Mucosa of descending colon (tissue), 3 donors: ENCODE measurements at regions of chr6 and their contacts with region 1.

Region 1: DNA sequence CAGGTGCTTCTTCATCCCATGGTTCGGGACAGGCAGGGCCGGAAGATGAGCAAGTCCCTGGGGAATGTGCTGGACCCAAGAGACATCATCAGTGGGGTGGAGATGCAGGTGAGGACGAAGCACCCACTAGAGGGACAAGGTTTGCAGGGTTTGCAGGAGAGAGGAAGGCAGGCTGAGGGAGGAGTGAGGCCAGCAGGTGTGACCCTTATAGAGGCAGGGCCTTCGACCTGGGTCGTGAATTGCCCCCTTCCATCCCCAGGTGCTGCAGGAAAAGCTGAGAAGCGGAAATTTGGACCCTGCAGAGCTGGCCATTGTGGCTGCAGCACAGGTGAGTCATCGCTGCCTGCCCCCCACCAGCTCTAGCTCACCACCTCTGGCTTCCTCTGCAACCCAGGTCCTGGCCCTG is 8.4 kb downstream of the VARS2 start:
- DNase-seq: no peak
- ATAC-seq: no peak
- H3K4me3 ChIP-seq: no peak overlapping the region
- H3K4me1 ChIP-seq: no peaks in the 10 kb centered on the region
- CTCF ChIP-seq: no peak

Region 2: DNA sequence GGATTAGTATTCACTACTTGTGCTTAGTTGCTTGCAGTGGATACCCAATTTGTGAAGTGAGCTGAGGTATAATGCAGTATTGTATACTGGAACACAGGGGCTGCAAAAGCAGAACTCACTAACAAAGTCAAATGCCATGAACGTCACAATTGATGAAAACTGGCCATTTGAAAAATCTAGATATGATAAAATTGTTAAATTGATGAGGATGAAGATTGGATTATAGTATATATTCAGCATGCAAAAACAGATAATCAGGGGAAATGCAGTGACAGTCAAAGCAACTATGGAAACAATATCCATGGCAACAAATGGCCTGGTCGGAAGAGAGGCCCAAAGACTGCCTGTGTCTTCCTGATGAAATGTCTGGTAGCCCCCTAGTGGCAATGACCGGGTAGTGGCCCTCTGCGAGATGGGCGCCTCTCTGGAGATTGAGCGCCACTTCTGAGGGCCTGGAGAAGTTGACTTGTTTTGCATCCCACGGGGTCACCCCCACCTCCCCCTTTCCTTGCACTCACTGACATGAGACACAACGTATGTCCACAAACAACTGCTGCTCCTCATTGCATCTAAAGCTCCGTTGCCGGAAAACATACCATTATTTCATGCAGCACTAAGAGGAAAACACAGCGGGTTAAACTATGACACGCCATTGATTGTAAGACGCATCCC is 146.4 kb after region 1 on chr6:
- intact Hi-C with region 1: loop called in 1 of 2 experiments (anchors 5 kb)
- DNase-seq: peak; percentile 64 to 89 (median 84)
- ATAC-seq: peak; percentile 97
- H3K4me3 ChIP-seq: no peak overlapping the region
- H3K4me1 ChIP-seq: no peaks in the 10 kb centered on the region
- CTCF ChIP-seq: peak; percentile 89